Left cardiac atrium (tissue), 4 donors: ENCODE measurements at regions of chr11 and their contacts with region 1.

Region 1: DNA sequence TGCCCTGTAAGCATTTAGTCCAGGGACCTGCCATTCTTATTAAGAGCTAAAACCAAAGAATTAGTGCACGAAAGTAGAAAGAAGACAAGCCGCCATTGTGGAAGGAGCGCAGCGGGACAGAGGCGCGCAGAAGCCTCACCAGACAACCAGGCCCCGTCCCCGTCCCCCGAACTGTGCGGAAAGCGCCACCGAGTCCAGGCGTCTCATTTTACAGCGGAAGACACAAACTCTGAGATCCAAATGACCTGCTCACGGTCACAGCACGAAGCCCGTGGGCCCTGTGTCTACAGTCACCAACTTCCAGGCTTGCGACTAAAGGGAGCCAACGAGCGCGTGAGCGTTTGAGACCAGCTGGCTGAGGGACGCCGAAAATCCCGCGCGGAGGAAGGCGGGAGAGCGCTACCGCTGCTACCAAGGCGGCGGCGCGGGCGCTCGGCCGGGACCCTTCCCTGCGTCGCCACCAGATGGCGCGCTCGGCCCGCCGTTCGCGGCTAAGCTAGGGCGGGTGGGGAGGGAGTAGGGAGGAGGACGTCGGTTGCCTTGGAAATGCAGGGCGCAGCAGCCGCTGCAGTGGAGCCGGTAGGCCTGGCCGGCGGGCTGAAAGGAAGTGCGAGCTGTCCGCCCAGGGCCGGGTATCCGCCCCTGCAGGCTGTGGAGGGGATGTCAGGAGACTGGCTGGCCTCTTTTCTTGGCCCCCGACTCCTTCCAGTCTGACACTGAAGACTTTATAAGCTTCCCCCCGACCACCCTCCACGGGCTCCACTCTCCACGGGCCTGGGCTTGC is 434 bp upstream of the CCDC83 start:
- DNase-seq: peak; percentile 94
- ATAC-seq: peak; percentile 98 to 99

Region 2: GRCh38 chr11:85772695-85773094 is 82.1 kb before region 1 on chr11:
- intact Hi-C with region 1: no loop called
- DNase-seq: no peak
- ATAC-seq: peak in 1 of 2 donors; percentile 38

Region 3: DNA sequence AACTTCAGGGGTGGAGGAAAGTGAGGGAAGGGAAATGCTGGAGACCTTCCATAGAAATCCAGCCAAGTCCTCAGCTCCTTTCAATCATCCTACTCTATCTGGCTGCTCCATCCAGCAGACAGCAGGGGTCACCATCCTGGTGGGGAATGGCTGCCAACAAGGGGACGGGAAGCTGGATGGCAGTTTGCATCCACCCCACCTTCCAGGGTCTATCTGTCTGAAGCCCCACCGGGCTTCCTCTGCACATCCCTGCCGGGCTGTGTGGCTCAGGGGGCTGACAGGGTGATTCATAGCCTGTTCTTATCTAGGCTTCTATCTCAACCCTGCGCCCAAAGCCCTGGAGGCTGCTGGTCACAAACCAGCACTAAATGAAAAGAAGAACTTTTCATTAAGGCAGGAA is 44.9 kb before region 1 on chr11:
- intact Hi-C with region 1: no loop called
- DNase-seq: no peak
- ATAC-seq: peak in 1 of 2 donors; percentile 8

Region 4: DNA sequence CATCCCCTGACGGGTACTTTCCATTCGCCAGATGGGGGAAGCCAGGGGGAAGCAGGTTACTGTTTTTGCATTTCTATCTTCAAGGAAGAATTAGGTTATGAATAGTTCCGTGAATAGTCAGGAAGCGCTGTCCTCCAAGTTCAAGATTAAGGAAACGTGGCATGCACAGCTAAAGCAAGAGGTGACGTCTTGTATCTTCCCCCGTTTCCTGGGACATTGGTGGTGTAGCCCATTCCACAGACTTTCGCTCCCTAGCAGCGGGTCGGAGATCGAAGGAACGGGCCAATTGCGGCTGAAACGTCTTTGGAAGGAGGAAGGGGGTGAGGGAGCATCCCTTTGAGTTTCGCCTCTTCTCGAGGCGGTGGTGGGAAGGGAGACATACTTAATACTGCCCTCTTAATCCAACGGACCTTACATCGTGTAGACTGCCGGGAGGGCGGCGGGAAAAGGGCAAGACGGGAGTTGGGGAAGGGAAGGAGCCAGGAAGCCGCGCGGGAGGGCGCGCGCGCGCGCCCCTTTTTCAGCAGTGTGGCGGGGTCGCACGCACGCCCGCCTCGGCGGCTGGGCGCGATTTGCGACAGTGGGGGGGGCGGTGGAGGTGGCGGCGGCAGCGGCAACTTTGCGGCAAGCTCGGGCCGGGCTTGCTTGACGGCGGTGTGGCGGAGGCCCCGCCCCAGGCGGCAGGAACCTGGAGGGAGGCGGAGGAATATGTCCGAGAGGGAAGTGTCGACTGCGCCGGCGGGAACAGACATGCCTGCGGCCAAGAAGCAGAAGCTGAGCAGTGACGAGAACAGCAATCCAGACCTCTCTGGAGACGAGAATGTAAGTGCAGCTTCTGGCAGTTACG is 390.0 kb after region 1 on chr11 and contains the start of gene EED:
- intact Hi-C with region 1: loop called in 1 of 2 experiments (anchors 10 kb)
- DNase-seq: peak; percentile 96
- ATAC-seq: peak; percentile 95 to 97
- total RNA-seq, gene EED: 14.3 to 14.8 TPM

Region 5: DNA sequence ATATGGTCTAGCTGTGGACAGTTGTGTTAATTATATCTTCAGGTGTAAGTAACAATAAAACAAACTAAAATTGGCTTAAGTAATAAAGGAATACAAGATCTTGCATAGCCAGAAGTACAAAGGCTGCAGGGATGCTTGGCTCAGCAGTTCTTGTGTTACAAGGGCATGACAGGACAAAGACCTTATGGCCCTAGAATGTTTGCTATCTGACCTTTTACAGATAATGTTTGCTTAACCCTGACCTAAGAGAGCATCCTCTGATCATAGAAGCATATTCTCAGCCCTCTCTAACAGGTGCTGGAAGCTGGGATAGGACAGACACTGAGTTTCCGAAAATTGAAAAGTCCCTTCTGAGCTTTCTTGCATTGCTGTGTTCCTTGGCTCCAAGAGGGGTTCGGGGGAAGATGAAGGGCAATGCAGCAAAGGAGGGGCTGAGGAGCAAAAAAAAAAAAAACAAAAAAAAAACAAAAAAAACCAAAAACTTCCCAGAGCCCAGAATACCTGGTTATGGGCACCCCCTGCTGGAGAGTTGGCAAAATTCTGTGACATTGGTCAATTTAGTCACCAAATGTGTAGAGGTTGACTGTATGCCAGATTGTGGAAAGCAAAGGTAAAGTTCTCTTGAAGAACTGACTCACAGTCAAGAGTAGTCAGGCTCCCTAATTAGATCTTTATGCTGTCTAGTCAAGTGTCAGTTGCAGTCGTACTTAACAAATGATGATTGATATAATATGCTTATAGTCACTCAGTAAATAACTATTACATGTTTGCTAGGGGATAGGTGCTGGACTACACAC is 436.9 kb after region 1 on chr11:
- intact Hi-C with region 1: loop called in 1 of 2 experiments (anchors 10 kb)
- DNase-seq: peak; percentile 37
- ATAC-seq: peak in 1 of 2 donors; percentile 17